ENCODE measurements at regions of chr2 and their contacts with region 1.

Region 1: GRCh38 chr2:231104115-231104713 is 20.6 kb downstream of the HTR2B start:
- DNase-seq: peak; percentile 25
- H3K4me3 Mint-ChIP-seq: no peak overlapping the region
- H3K27ac Mint-ChIP-seq: no peak overlapping the region
- H3K4me1 Mint-ChIP-seq: peaks cover 22% of the 10 kb centered on the region
- H3K27me3 Mint-ChIP-seq: no peaks in the 10 kb centered on the region

Region 2: GRCh38 chr2:230981704-230982103 is 122.5 kb before region 1 on chr2:
- intact Hi-C with region 1: no loop called
- DNase-seq: no peak
- H3K4me3 Mint-ChIP-seq: no peak overlapping the region
- H3K27ac Mint-ChIP-seq: no peak overlapping the region
- H3K4me1 Mint-ChIP-seq: peaks cover 49% of the 10 kb centered on the region
- H3K27me3 Mint-ChIP-seq: peaks cover 44% of the 10 kb centered on the region

Region 3: GRCh38 chr2:231124838-231125568 is 20.8 kb after region 1 on chr2 and contains the start of gene HTR2B:
- intact Hi-C with region 1: no loop called
- DNase-seq: no peak
- H3K4me3 Mint-ChIP-seq: no peak within 1 kb of the TSS
- H3K27ac Mint-ChIP-seq: no peak within 1 kb of the TSS
- H3K4me1 Mint-ChIP-seq: peaks cover 25% of the 10 kb centered on the region
- H3K27me3 Mint-ChIP-seq: no peaks in the 10 kb centered on the region
- total RNA-seq, gene HTR2B: not detected in 2 replicates

Region 4: GRCh38 chr2:231198291-231199173 is 94.3 kb after region 1 on chr2 and contains the start of gene ARMC9:
- intact Hi-C with region 1: loop called (anchors 10 kb)
- DNase-seq: peak; percentile 78
- H3K4me3 Mint-ChIP-seq: peak within 1 kb of the TSS; percentile 92
- H3K27ac Mint-ChIP-seq: no peak within 1 kb of the TSS
- H3K4me1 Mint-ChIP-seq: peaks cover 24% of the 10 kb centered on the region
- H3K27me3 Mint-ChIP-seq: peaks cover 25% of the 10 kb centered on the region
- total RNA-seq, gene ARMC9: 2.2 and 3.8 TPM in 2 replicates

Region 5: DNA sequence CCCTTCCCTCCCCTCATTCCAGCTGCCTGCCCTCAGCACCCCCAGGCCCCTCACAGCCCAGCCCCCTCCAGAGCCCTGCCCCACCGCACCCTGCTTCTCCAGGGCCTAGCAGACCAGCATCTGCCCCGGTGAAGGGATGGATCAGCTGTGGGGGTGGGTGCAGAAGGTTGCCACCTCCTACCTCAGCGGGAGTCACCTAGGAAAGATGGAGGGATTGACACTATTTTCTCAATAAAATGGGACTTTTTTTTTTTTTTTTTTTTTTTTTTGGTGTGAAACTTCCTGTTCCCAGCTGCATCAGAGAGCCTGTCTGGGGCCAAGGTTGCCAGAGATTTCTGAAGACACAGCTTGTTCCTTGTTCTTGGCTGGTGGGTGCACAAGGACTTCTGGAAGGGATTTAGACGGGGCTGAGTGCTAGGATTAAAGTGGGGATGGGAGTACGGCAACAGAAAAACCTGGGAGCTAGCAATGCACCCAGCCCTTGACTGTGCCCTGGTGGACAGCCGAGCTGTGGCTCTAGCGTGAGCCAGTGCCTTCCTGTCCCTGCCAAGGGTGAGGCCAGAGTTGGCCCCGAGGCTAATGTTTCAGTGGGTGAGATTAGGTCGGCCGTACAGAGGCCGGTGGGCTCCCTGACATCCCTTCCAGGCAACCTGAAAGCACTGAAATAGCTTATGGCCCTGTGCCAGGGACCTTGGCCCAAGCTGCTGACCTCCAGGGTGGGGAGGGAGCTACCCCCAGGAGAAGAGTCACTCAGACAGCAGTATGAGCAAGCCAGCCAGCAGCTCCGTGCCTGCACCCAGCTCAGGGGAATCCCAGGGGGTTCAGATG is 295.9 kb after region 1 on chr2:
- intact Hi-C with region 1: loop called (anchors 1 kb)
- DNase-seq: no peak
- H3K4me3 Mint-ChIP-seq: no peak overlapping the region
- H3K27ac Mint-ChIP-seq: no peak overlapping the region
- H3K4me1 Mint-ChIP-seq: peaks cover 1% of the 10 kb centered on the region
- H3K27me3 Mint-ChIP-seq: peaks cover 21% of the 10 kb centered on the region

Region 6: DNA sequence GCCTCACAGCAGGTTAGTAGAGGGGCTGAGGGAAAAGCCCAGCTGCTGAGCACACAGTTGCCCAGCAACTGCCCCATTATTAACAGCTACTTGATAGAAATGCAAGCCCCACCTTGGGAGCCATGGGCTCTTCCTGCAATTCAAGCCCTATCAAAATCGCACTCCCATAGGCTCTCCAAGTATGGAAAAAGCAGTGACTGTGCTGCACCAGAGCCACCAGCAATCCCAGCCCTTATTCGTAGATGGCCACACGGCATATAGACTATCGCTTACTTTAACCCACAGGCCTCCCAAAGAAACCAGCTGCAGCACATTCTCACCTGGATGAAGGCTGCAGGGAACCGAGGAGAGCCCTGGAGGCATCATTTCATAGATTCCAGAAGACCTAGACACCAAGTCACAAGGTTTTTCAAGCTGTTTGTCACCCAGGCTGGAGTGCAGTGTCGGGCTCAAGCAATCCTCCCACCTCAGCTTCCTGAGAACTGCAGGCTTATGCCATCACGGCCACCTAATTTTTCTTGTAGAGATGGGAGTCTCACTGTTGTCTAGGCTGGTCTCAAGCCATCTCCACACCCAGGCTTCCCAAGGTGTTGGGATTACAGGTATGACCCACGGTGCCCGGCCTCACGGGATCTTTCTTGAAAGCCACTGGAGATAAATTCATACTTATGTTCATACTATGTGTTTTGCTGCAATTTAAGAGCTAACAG is 348.7 kb after region 1 on chr2:
- intact Hi-C with region 1: loop called (anchors 1 kb)
- DNase-seq: no peak
- H3K4me3 Mint-ChIP-seq: no peak overlapping the region
- H3K27ac Mint-ChIP-seq: peak overlapping the region; percentile 52
- H3K4me1 Mint-ChIP-seq: peaks cover 17% of the 10 kb centered on the region
- H3K27me3 Mint-ChIP-seq: no peaks in the 10 kb centered on the region